ENCODE measurements at regions of chr16 and their contacts with region 1.

Region 1: GRCh38 chr16:3503523-3503922 is 2.7 kb downstream of the CLUAP1 start:
- DNase-seq: peak; percentile 61 to 76 (median 67)
- H3K4me3 ChIP-seq: peak overlapping the region in 1 of 2 donors; percentile 12
- H3K4me3 Mint-ChIP-seq: peak overlapping the region; percentile 68 to 84 (median 79)
- H3K27ac ChIP-seq: peak overlapping the region; percentile 4
- H3K27ac Mint-ChIP-seq: peak overlapping the region; percentile 88 to 95 (median 93)
- H3K4me1 ChIP-seq: peaks cover 65% of the 10 kb centered on the region
- H3K4me1 Mint-ChIP-seq: peaks cover 45 to 74% (median 55%) of the 10 kb centered on the region in 4 donors
- H3K27me3 ChIP-seq: no peaks in the 10 kb centered on the region
- H3K27me3 Mint-ChIP-seq: no peaks in the 10 kb centered on the region

Region 2: DNA sequence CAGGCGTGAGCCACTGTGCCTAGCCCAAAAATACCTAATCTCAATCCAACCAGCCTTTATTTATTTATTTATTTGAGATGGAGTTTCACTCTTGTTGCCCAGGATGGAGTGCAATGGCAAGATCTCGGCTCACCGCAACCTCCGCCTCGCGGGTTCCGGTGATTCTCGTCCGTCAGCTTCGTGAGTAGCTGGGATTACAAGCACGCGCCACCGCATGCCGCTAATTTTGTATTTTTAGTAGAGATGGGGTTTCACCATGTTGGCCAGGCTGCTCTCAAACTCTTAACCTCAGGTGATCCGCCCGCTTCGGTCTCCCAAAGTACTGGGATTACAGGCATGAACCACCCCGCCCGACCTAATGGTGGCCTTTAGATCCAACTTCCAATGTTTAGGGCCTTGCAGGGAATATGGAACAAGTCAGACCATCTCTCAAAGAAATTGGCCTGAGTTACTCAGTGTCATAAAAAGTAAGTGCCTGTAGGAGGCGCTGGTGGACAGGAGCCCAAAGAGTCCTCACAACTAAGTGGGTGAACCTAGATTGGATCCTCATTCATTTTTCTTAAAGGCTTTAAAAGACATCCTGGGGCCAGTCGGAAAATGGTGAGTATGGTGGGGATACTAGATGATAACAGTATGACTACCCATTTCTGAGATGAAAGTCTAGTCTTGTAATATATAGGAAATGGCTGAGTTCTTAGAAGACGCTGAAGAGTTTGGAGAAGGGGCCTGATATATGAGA is 409.1 kb before region 1 on chr16:
- CTCF ChIA-PET with region 1: no interaction called
- POLR2A ChIA-PET with region 1: no interaction called
- intact Hi-C with region 1: loop called (anchors 1 kb)
- DNase-seq: peak; percentile 58 to 76 (median 66)
- H3K4me3 ChIP-seq: no peak overlapping the region
- H3K4me3 Mint-ChIP-seq: peak overlapping the region in 5 of 8 donors; percentile 3 to 77 (median 22)
- H3K27ac ChIP-seq: no peak overlapping the region
- H3K27ac Mint-ChIP-seq: peak overlapping the region; percentile 17 to 95 (median 78)
- H3K4me1 ChIP-seq: peaks cover 45% of the 10 kb centered on the region
- H3K4me1 Mint-ChIP-seq: peaks cover 9 to 56% (median 32%) of the 10 kb centered on the region in 4 donors
- H3K27me3 ChIP-seq: no peaks in the 10 kb centered on the region
- H3K27me3 Mint-ChIP-seq: no peaks in the 10 kb centered on the region

Region 3: DNA sequence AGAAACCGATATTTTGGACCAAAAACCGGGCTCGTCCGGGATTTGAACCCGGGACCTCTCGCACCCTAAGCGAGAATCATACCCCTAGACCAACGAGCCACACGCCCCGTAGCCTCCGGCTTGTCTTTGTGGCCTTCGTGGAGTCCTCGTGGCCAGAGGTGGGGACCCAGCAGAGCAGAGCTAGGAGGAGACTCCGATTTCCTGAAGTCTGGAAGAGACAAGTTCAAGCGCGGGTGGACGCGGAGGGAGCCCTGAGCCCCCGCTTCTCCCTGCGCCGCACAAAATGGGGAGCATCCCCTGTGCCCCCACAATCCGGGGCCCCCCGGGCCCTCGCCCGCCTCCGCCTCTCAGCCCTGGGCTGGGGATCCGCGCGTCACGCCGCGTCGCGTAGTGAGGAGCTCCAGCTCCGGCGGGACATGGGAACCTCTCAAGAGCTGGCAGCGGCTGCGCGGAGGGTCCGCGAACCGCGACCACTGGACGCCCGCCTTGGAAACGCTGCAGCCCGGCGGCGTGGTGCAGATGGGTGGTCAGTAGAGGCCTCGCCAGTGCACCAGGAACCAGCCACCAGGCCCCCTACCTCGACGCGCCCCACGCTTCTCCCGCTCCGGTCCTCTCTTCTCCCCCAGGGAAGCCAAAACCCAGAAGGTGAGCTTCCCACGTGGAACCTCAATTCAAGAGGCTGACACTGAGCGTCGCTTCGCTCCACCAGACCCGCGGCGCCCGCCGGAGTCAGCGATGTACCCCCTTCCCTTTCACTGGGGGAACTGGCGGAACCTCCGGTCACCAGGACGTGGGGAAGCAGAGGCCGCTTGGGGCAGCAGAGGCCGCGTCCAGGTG is 320.7 kb before region 1 on chr16:
- CTCF ChIA-PET with region 1: interaction called, 11 read pairs
- POLR2A ChIA-PET with region 1: interaction called, 4 read pairs
- intact Hi-C with region 1: loop called (anchors 1 kb)
- DNase-seq: peak in 3 of 5 donors; percentile 35 to 54 (median 45)
- H3K4me3 ChIP-seq: peak overlapping the region in 1 of 2 donors; percentile 45
- H3K4me3 Mint-ChIP-seq: peak overlapping the region; percentile 59 to 86 (median 73)
- H3K27ac ChIP-seq: no peak overlapping the region
- H3K27ac Mint-ChIP-seq: peak overlapping the region in 5 of 7 donors; percentile 37 to 89 (median 80)
- H3K4me1 ChIP-seq: peaks cover 23% of the 10 kb centered on the region
- H3K4me1 Mint-ChIP-seq: peaks cover 16 to 35% (median 21%) of the 10 kb centered on the region in 4 donors
- H3K27me3 ChIP-seq: peaks cover 52% of the 10 kb centered on the region
- H3K27me3 Mint-ChIP-seq: peaks cover 55 to 66% of the 10 kb centered on the region in 2 donors

Region 4: DNA sequence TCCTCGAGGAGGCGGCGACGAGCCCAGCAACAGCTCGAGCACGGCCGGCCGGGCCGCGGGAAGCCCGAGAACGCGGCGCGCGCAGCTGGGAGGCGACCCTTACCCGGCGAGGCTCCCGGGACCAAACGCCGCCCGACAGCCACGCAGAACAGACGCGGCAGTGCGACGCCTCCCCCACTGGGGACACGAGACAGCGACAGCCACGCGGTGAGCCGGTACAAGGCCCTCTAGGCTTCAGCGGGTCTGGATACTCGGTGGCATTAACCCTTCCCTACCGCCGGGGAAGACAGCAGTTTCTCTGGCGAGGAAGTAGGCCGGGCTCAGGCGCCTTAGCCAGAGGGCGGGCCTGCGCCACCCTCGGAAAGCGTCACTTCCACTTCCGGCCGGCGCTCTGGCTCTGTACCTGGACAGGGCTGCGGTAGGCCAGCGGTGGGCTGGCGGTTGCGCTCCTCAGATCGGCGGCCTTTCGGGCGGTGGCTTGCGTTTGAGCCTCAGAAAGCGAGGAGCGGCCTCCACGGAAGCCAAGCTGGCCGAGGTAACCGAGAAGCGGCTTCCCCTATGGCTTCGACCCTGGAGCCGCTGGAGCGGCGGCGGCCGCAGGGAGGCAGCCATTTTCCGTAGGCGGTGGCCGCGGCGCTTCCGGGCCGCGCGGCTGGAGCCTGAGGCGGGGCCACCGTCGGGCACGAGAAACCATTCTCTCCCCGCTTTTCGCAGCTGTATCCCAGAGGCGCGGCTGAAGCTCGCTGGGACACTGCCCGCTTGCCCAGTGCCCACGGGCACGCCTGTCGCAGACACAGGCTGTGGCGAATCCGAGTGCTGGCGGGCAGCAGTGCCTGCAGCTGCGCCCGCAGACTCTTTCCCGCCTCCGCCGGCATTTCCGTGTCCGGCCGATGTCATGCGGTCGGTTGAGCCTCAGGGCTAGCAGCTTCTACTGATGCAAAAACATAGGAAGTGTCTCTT is 198.1 kb before region 1 on chr16 and contains the starts of genes TIGD7 and ZNF75A:
- CTCF ChIA-PET with region 1: no interaction called
- POLR2A ChIA-PET with region 1: interaction called, 4 read pairs
- intact Hi-C with region 1: loop called (anchors 1 kb)
- DNase-seq: peak; percentile 82 to 93 (median 85)
- H3K4me3 ChIP-seq: peak within 1 kb of the TSS; percentile 80 to 88
- H3K4me3 Mint-ChIP-seq: peak within 1 kb of the TSS; percentile 79 to 87 (median 85)
- H3K27ac ChIP-seq: peak within 1 kb of the TSS; percentile 70
- H3K27ac Mint-ChIP-seq: peak within 1 kb of the TSS; percentile 64 to 84 (median 82)
- H3K4me1 ChIP-seq: peaks cover 16% of the 10 kb centered on the region
- H3K4me1 Mint-ChIP-seq: peaks cover 7 to 13% (median 11%) of the 10 kb centered on the region in 4 donors
- H3K27me3 ChIP-seq: no peaks in the 10 kb centered on the region
- H3K27me3 Mint-ChIP-seq: no peaks in the 10 kb centered on the region
- total RNA-seq, gene TIGD7: 14.2 to 19.0 TPM
- total RNA-seq, gene ZNF75A: 82.7 to 88.1 TPM

Region 5: DNA sequence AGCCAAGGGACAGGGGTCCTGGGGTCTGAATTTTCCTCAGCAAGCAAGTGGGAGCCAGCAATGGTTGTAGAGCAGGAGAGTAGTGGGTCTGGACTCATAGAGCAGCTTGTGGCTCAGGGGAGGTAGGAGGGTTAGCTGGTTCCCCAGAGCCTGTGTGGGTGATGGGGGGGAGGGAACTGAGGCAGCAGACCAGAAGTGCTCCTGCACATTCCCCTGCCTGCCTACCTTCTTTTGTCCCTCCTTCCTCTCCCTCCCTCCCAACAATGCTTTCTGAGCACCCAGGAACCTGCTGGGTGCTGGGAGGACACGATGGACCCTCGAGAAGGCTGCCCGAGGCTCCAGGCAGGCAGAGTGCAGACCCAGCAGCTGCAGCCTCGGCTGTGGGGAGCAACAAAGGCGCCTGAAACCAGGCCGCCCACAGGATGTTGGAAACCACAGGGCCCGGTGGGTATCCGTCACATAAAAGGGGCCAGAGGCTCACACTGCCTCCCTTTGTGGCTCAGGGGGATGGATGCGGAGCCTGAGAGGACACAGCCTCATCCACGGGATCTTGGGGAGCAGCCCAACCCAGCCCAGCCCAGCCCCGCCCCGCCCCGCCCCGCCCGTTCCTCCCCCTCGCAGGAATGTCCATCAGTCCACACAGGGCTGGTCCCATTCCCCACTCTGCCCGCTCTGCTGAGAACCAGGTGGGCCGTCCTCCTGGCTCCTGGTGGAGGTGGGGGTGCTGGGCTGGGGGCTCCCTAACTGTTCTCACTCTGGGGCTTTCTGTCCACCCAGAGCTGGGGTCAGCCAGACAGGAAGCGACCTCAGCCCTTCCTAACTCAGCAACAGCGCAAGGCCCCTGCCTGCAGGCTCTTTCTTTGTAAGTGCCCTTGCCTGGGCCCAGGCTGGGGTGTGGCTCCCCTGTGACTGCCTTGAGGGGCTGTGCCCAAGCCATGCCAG is 75.4 kb after region 1 on chr16:
- CTCF ChIA-PET with region 1: no interaction called
- POLR2A ChIA-PET with region 1: interaction called, 3 read pairs
- intact Hi-C with region 1: loop called (anchors 5 kb)
- DNase-seq: peak; percentile 43 to 69 (median 57)
- H3K4me3 ChIP-seq: peak overlapping the region; percentile 47 to 61
- H3K4me3 Mint-ChIP-seq: peak overlapping the region; percentile 94 to 99 (median 98)
- H3K27ac ChIP-seq: peak overlapping the region; percentile 75
- H3K27ac Mint-ChIP-seq: peak overlapping the region; percentile 90 to 98 (median 95)
- H3K4me1 ChIP-seq: peaks cover 45% of the 10 kb centered on the region
- H3K4me1 Mint-ChIP-seq: peaks cover 22 to 65% (median 44%) of the 10 kb centered on the region in 4 donors
- H3K27me3 ChIP-seq: no peaks in the 10 kb centered on the region
- H3K27me3 Mint-ChIP-seq: no peaks in the 10 kb centered on the region

Measured in CD4-positive, alpha-beta memory T cell (primary cell).